ENCODE measurements at regions of chr1 and their contacts with region 1.

Region 1: GRCh38 chr1:232635778-232636356 is 5.9 kb upstream of the SIPA1L2 start:
- DNase-seq: no peak
- H3K4me3 ChIP-seq: no peak overlapping the region
- H3K27ac ChIP-seq: no peak overlapping the region
- H3K4me1 ChIP-seq: peaks cover 3 to 10% (median 3%) of the 10 kb centered on the region in 4 donors
- H3K27me3 ChIP-seq: no peaks in the 10 kb centered on the region
- CTCF ChIP-seq: peak; percentile 72 to 82 (median 78)
- EP300 ChIP-seq: no peak
- POLR2A ChIP-seq: no peak

Region 2: GRCh38 chr1:232805269-232806185 is 169.7 kb after region 1 on chr1 and contains the start of gene MAP10:
- intact Hi-C with region 1: loop called (anchors 5 kb)
- DNase-seq: no peak
- H3K4me3 ChIP-seq: peak within 1 kb of the TSS; percentile 73 to 82 (median 74)
- H3K27ac ChIP-seq: peak within 1 kb of the TSS; percentile 70 to 81 (median 76)
- H3K4me1 ChIP-seq: peaks cover 12 to 23% (median 18%) of the 10 kb centered on the region in 4 donors
- H3K27me3 ChIP-seq: no peaks in the 10 kb centered on the region
- CTCF ChIP-seq: no peak
- EP300 ChIP-seq: no peak
- POLR2A ChIP-seq: no peak
- total RNA-seq, gene MAP10: 1.0 to 1.6 (median 1.4) TPM

Region 3: GRCh38 chr1:232950197-232951176 is 314.6 kb after region 1 on chr1 and contains the start of gene NTPCR:
- intact Hi-C with region 1: loop called (anchors 2 kb)
- DNase-seq: peak; percentile 96
- H3K4me3 ChIP-seq: peak within 1 kb of the TSS; percentile 72 to 84 (median 79)
- H3K27ac ChIP-seq: peak within 1 kb of the TSS; percentile 77 to 84 (median 82)
- H3K4me1 ChIP-seq: peaks cover 17 to 34% (median 26%) of the 10 kb centered on the region in 4 donors
- H3K27me3 ChIP-seq: no peaks in the 10 kb centered on the region
- CTCF ChIP-seq: peak in 2 of 3 experiments; percentile 24 to 28
- EP300 ChIP-seq: no peak
- POLR2A ChIP-seq: no peak
- total RNA-seq, gene NTPCR: 21.7 to 26.6 (median 24.6) TPM

Region 4: DNA sequence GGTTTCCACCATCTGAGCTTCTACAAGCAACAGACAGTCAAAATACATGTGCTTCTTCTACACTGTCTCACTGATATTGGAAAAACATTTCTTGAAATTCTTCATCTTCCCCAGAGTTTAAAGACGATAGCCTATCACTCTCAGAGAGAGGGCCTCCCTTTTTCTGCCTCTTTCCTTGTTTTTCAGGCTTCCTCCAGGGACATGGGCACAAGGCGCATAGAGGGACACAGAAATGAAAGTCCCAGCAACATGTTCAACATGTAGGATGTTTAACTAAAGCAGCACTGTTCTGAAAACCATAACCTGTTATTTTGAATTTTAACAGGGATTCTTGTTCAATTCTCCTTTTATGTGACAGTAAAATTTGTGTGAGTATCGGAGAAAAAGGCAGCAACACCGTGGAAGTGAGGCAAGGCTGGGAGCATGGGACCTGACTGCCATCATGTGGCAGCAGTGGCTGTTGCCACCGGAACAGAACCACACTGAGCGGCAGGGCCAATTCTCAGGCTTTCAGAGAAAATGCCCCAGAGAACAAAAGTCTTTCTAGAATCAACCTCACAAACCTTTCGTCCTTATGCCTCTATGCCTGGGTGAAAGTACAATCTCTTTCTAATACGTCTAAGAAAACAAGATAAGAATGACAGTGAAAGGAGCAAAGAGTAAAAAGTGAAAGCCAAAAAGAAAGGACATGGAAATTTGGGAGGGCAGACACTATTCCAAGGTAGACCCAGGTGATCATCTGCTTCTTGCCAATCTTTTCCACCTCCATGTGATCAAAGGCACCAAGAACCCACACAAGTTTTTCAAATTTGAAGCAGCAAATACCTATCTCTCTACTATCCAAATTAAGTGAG is 605.2 kb after region 1 on chr1:
- intact Hi-C with region 1: loop called (anchors 5 kb)
- DNase-seq: peak; percentile 91
- H3K4me3 ChIP-seq: peak overlapping the region in 1 of 4 donors; percentile 41
- H3K27ac ChIP-seq: no peak overlapping the region
- H3K4me1 ChIP-seq: peaks cover 0 to 9% (median 0%) of the 10 kb centered on the region in 4 donors
- H3K27me3 ChIP-seq: no peaks in the 10 kb centered on the region
- CTCF ChIP-seq: peak; percentile 67 to 81 (median 76)
- EP300 ChIP-seq: no peak
- POLR2A ChIP-seq: no peak

Region 5: DNA sequence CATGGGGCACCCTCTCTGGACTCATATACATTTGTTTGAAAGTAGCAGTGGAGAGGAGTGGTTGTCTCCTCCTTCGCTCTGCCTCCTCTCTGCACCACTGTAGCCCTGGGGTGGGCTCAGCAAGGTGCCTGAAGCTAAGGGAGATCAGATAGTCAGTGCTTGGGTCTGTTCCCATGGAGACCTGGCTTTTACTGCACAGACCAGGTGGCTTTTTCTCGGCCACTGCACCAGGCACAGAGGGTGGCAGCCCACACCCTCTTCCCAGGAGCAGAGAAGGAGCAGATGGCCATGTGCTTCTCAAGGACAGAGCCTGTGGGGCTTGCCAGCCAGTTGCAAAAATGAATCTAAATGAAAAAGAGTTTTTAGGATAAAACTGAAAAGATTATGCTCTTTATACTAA is 854.6 kb after region 1 on chr1:
- intact Hi-C with region 1: no loop called
- DNase-seq: peak; percentile 60
- H3K4me3 ChIP-seq: no peak overlapping the region
- H3K27ac ChIP-seq: no peak overlapping the region
- H3K4me1 ChIP-seq: no peaks in the 10 kb centered on the region
- H3K27me3 ChIP-seq: no peaks in the 10 kb centered on the region
- CTCF ChIP-seq: no peak
- EP300 ChIP-seq: no peak
- POLR2A ChIP-seq: no peak

Measured in esophagus muscularis mucosa (tissue), 4 donors.